Endothelial cell of umbilical vein (primary cell): ENCODE measurements at regions of chr6 and their contacts with region 1.

Region 1: DNA sequence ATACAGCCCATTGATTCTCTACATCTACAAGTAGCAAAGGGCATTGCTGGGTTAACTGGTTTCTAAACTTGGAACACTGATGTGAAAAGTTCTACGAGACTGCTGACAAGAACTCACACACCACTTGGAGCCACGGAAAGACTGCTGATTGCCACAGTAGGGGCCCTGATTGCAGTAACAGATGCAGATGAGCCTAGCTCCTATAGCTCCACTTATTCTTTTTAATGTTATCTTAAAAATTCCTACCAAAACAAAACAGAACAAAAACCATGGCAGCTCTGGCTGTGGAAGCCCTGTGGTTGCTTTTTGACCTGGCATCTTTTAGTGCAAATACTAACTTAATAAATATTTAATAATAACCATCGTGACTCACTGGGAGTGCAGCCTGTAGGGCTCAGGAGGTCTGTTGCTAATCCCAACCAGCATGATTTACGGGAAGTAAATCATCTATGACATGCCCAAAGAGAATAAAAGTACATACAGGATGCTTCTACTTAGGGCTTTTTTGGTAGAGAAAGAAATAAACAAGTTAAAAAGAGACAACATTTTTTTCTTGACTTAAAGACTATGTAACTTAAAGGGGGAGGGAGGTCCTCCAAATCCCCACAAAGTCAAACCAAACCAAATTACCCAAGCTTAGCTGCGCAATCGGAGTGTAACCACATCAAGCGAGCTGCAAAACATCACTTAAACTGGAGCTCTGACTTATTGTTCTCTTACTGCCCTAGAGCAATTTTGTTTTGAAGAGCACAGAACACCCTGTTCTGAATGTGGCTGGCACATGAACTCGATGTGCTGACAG is 87.2 kb downstream of the FKBP5 start:
- DNase-seq: peak; percentile 88
- H3K4me3 ChIP-seq: peak overlapping the region in 1 of 3 experiments; percentile 21
- H3K27ac ChIP-seq: peak overlapping the region; percentile 96
- H3K4me1 ChIP-seq: peaks cover 72% of the 10 kb centered on the region
- H3K27me3 ChIP-seq: no peaks in the 10 kb centered on the region
- CTCF ChIP-seq: no peak
- POLR2A ChIP-seq: no peak

Region 2: DNA sequence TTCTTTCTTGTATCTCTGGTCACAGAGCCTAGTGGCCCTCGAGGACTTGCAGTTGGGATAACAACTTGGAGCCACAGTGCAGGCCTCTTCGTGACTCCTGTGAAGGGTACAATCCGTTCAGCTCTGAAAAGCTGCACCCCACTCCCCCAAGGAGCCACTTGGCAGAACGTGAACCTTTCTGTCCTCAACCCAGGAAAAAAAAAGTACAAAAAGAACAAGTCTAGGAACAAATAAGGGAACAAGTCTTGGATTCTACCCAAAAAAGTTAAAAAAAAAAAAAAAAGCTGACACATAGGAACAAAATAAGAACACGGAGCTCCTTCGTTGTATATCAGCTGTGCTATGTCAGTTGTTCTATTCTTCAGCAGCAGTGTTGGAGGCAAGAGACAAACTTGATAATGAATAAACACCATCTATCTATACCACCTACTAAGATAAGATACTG is 10.9 kb before region 1 on chr6:
- CTCF ChIA-PET with region 1: interaction called, 28 read pairs
- POLR2A ChIA-PET with region 1: interaction called, 3 read pairs
- dilution Hi-C with region 1: no loop called
- intact Hi-C with region 1: no loop called
- DNase-seq: peak; percentile 38
- H3K4me3 ChIP-seq: no peak overlapping the region
- H3K27ac ChIP-seq: no peak overlapping the region
- H3K4me1 ChIP-seq: no peaks in the 10 kb centered on the region
- H3K27me3 ChIP-seq: no peaks in the 10 kb centered on the region
- CTCF ChIP-seq: no peak
- POLR2A ChIP-seq: no peak

Region 3: DNA sequence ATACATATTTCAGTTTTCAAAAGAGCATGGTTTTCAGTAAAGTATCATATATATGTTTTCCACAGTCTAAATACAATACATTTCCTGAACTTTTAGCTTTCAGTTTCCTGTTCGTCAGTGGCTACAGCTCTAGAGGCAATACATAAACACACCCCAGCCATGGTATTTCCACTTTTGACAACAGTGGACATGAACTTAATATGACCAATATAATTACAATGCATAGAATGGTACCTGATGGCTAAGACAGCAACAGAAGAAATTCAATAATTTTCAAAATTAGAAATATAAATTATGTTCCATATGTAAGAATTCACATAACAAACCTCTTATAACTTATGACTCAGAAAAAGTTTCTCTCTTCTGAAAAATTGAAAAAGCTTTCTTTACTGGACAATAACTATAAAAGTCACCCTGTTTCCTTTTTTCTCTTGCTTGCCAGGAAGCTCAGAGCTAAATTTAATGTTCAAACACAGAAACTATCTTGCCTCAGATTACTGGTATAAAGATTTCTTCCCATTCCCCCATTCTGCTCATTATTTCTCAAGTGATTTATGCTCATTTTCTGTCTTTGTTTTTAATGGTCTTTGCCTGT is 68.0 kb after region 1 on chr6:
- CTCF ChIA-PET with region 1: interaction called, 7 read pairs
- POLR2A ChIA-PET with region 1: no interaction called
- dilution Hi-C with region 1: no loop called
- intact Hi-C with region 1: loop called (anchors 2 kb)
- DNase-seq: peak; percentile 94
- H3K4me3 ChIP-seq: peak overlapping the region in 2 of 3 experiments; percentile 2 to 59
- H3K27ac ChIP-seq: peak overlapping the region; percentile 95
- H3K4me1 ChIP-seq: peaks cover 51% of the 10 kb centered on the region
- H3K27me3 ChIP-seq: no peaks in the 10 kb centered on the region
- CTCF ChIP-seq: no peak
- POLR2A ChIP-seq: no peak